ENCODE measurements at regions of chr12 and their contacts with region 1.

Region 1: DNA sequence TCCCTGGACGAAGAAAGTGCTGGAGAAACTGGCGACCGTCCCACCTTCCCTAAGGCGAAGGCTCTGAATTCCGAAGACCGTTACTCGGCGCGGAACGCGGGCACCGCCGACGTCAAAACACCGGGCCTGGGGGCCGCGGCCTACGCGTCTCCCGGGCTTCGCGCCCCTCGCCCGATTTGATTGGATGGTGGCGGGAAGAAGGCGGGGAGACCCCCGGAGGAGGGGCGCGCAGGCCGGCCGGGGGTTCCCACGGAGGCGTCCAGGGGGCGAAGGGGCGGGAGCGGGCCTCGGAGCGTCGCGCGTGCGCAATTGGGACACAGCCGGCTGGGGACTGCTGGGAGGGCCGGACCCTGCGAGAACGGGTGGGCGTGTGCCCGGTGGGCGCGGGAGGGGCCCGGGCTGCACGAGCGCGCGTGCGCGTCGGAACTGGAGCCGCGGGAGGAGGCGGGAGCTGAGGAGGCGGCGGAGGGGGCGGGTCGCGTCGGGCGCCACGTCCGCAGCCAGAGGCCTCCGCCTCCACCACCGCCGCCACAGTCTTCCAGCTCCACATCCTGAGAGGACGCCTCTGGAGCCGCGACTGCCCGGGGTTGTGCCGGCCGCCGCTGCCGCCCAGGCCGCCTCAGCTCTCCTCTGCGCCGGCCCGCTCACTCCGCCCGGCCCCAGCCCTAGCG is at the start of gene TMEM263:
- DNase-seq: peak; percentile 90 to 96 (median 95)
- H3K4me3 ChIP-seq: peak within 1 kb of the TSS; percentile 88
- H3K4me3 Mint-ChIP-seq: peak within 1 kb of the TSS; percentile 94 to 99 (median 98)
- H3K27ac ChIP-seq: peak within 1 kb of the TSS; percentile 88
- H3K27ac Mint-ChIP-seq: peak within 1 kb of the TSS; percentile 92 to 96 (median 94)
- H3K4me1 ChIP-seq: peaks cover 17% of the 10 kb centered on the region
- H3K4me1 Mint-ChIP-seq: peaks cover 22 to 50% (median 47%) of the 10 kb centered on the region in 3 donors
- H3K27me3 ChIP-seq: no peaks in the 10 kb centered on the region
- H3K27me3 Mint-ChIP-seq: no peaks in the 10 kb centered on the region
- total RNA-seq, gene TMEM263: 22.7 to 25.3 TPM

Region 2: DNA sequence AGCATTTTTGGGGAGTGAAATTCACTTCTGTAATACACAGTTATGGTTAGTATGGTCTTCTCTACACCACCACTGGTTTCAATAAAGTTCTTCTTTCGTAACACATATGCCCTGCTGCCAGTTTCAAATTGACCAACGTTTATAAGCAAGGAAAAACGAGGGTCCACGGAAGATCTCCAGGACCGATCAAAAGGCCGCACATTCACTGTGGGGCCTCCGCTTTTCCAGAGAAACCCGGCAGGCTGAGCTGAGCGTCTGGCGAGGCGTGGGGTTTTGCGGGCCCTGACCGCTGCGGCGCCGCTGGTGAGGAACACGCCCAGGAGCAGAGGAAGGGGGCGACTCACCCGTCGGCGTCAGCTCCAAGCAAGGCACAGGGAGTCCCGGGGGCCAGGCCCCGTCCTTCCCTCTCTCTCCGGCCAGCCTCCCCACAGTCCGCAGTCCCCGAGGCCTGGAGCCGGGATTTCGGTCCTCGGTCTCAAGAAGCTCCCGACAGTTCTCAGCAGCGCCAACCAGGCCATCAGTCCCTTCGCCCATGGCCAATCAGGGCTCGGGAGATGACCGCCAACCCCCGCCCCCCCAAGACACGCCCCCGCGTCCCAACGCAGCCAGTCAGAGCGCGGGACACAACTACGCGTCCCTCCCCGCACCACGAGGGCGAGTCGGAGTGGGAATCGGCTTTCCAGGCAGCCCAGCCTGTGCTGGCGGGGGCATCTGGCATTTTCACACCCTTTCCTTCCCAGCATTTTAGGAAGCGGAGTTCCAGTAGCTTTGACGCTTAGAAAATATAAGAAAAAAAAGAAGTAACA is 31.3 kb after region 1 on chr12 and contains the start of gene MTERF2:
- CTCF ChIA-PET with region 1: interaction called, 3 read pairs
- POLR2A ChIA-PET with region 1: interaction called, 14 read pairs
- DNase-seq: peak; percentile 67 to 83 (median 73)
- H3K4me3 ChIP-seq: peak within 1 kb of the TSS; percentile 60
- H3K4me3 Mint-ChIP-seq: peak within 1 kb of the TSS; percentile 92 to 98 (median 96)
- H3K27ac ChIP-seq: peak within 1 kb of the TSS; percentile 64
- H3K27ac Mint-ChIP-seq: peak within 1 kb of the TSS; percentile 84 to 97 (median 95)
- H3K4me1 ChIP-seq: peaks cover 24% of the 10 kb centered on the region
- H3K4me1 Mint-ChIP-seq: peaks cover 33 to 41% (median 41%) of the 10 kb centered on the region in 3 donors
- H3K27me3 ChIP-seq: no peaks in the 10 kb centered on the region
- H3K27me3 Mint-ChIP-seq: no peaks in the 10 kb centered on the region
- total RNA-seq, gene MTERF2: 4.6 to 4.9 TPM

Region 3: DNA sequence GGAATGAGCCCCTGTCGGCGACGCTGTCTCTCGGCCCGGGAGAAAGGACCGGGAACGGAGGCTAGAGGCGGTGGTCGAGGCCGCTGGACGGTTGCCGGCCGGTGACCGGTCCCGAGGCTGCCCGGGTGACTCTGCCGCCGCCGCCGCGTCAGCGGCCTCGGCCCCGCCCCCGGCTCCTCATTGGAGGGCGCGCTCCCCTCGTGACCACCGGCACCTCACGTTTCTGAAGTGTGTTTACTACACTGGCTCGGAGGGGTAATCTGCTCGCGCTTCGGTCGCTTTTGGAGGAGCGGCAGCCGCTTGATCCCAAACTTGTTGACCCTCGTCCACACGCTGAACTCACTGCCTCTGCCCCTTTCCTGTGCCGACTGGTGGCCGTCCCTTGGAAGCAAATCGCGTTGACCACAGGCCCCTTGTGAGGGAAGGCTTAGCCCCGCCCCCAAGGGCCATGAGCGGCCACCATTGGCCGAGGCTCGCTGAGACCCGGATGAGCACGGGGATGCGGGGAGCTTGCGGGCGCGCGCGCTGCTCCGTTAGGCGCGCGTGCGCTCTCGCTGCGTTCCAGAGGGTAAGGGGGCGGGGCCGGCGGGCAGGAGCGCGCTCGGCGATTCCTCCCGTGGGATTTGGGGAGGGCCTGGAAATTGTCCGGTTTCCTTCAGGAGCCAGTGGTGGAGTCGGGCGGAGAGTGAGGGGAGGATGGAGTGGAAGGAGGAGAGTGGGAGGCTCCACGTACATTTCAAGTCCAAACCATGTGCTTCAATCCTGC is 138.1 kb after region 1 on chr12 and contains the start of gene CRY1:
- CTCF ChIA-PET with region 1: interaction called, 3 read pairs
- POLR2A ChIA-PET with region 1: interaction called, 13 read pairs
- DNase-seq: peak; percentile 89 to 95 (median 93)
- H3K4me3 ChIP-seq: peak within 1 kb of the TSS; percentile 68
- H3K4me3 Mint-ChIP-seq: no peak within 1 kb of the TSS
- H3K27ac ChIP-seq: peak within 1 kb of the TSS; percentile 99
- H3K27ac Mint-ChIP-seq: no peak within 1 kb of the TSS
- H3K4me1 ChIP-seq: peaks cover 22% of the 10 kb centered on the region
- H3K4me1 Mint-ChIP-seq: peaks cover 10 to 14% (median 13%) of the 10 kb centered on the region in 3 donors
- H3K27me3 ChIP-seq: no peaks in the 10 kb centered on the region
- H3K27me3 Mint-ChIP-seq: peaks cover 12 to 15% of the 10 kb centered on the region in 2 donors
- total RNA-seq, gene CRY1: 36.6 to 38.8 TPM

Measured in CD8-positive, alpha-beta memory T cell (primary cell).